Ovary (tissue), 10 donors: ENCODE measurements at regions of chr12 and their contacts with region 1.

Region 1: DNA sequence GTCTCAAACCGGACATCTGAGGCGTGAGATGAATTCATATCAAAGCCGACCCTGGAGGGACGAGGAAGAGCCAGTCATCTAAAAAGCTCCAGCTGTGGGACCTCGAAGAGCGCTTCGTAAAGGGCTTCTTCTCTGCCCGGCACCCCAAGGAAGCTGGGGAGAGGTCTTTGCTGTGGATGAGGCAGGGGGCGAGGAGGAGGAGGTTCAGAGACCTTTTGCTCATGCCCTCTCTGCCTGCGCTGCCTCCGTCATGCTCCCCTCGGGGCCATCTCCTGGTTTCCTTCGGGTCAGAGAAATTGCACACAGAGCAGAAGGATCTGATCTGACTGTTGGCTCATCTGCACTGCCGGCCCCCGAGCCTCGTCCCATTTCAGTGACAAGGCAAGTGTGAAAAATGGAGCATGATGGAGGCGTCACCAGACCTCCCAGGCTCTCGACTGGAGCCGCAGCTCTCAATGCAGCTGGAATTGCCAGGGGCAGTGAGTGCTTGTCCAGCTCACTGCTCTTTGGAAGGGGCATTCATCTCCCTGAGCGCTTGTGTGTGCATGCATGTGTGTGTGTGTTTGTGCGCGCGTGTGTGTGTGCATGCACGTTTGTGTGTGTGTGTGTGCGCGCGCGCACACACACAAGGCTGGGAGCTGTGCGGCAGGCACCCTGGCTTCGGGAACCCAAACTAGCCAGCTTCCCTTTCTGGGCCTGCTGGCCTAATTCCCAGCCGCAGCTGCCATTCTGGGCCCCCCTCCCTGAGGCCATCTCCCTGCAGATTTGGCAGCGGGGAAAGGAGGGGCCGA is 9.2 kb downstream of the CABP1 start:
- DNase-seq: no peak
- H3K4me3 ChIP-seq: peak overlapping the region; percentile 30
- H3K27ac ChIP-seq: no peak overlapping the region
- H3K4me1 ChIP-seq: no peaks in the 10 kb centered on the region
- H3K27me3 ChIP-seq: no peaks in the 10 kb centered on the region
- CTCF ChIP-seq: no peak
- EP300 ChIP-seq: no peak
- POLR2A ChIP-seq: no peak

Region 2: GRCh38 chr12:120687578-120688289 is 38.1 kb after region 1 on chr12:
- intact Hi-C with region 1: no loop called
- DNase-seq: peak in 1 of 5 donors; percentile 20
- H3K4me3 ChIP-seq: peak overlapping the region; percentile 92
- H3K27ac ChIP-seq: peak overlapping the region in 1 of 2 donors; percentile 90
- H3K4me1 ChIP-seq: peaks cover 9% of the 10 kb centered on the region
- H3K27me3 ChIP-seq: no peaks in the 10 kb centered on the region
- CTCF ChIP-seq: no peak
- EP300 ChIP-seq: no peak
- POLR2A ChIP-seq: no peak

Region 3: DNA sequence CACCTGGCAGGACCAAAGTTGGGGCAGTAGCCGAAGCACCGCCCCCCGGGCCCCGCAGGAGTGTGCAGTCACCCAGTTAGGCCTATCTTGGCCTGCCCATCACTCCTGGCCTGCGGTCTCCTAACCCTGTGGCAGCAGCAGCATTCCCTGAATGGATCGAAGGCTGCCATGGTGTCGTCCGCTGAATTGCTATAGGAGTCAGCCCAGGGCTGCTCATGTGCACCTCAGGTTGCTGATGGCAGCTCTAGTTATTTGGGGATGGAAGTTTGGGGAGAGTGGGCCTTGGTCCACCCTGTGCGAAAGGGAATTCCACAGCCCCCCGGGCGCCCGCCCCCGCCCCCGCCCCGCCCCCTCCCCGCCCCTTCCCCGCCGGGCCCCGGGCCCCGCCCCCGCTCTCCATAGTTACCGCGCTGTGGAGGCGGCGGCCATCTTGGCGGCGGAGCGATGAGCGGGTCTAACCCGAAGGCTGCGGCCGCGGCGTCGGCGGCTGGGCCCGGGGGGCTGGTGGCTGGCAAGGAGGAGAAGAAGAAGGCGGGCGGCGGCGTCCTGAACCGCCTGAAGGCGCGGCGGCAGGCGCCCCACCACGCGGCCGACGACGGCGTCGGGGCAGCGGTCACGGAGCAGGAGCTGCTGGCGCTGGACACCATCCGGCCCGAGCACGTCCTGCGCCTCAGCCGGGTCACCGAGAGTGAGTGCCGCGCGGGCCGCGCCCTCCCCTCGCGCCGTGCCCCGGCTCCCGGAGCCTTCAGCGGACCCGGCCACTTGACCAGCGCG is 60.6 kb after region 1 on chr12 and contains the start of gene UNC119B:
- intact Hi-C with region 1: loop called (anchors 5 to 10 kb)
- DNase-seq: peak; percentile 64 to 83 (median 80)
- H3K4me3 ChIP-seq: peak within 1 kb of the TSS; percentile 64
- H3K27ac ChIP-seq: peak within 1 kb of the TSS; percentile 56 to 76
- H3K4me1 ChIP-seq: peaks cover 4% of the 10 kb centered on the region
- H3K27me3 ChIP-seq: no peaks in the 10 kb centered on the region
- CTCF ChIP-seq: peak in 1 of 3 donors; percentile 6
- EP300 ChIP-seq: no peak
- POLR2A ChIP-seq: peak; percentile 53
- total RNA-seq, gene UNC119B: 18.4 to 54.4 (median 46.2) TPM

Region 4: GRCh38 chr12:120961604-120962531 is 312.2 kb after region 1 on chr12:
- intact Hi-C with region 1: loop called in 2 of 4 experiments (anchors 5 to 10 kb)
- DNase-seq: no peak
- H3K4me3 ChIP-seq: no peak overlapping the region
- H3K27ac ChIP-seq: no peak overlapping the region
- H3K4me1 ChIP-seq: no peaks in the 10 kb centered on the region
- H3K27me3 ChIP-seq: no peaks in the 10 kb centered on the region
- CTCF ChIP-seq: no peak
- EP300 ChIP-seq: no peak
- POLR2A ChIP-seq: no peak

Region 5: DNA sequence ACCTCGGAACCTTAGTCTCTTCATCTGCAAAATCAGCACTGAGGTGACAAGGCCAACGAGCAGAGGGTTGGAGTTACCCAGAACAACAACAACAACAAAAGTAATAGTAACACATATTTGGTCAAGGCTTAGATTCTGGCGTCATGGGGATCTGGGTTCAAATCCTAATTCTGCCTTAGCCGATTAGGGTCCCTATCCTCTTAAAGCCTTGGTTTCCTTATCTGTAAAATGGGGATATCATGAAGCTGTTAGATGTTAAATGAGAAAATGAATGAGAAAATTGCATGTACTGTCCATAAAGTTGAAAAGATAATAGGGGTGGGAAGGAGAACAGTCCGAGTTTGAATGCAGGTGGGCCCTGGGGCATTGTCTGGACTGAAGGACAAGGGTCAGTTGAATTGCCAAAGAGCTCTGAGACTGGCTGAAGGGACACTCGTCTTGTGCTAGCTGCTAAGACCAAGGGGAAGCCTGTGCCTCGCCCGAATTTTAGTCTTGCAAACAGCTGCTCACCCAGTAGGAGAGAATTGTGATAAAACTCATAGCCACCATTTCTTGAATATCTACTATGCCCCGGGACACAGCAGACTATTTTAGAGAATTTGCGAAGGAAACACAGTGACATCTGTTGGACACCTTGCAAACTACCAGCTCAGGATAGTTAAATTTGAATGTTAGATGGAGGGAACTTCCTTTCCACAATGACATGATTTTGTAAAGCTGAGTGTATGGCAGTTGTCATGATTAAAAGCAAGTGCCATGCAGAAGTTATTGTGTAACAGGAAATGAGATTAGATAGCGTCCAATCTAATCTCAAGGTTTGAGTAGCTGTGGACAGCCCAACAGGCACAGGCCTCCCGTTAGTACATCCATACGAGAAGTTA is 321.9 kb after region 1 on chr12:
- intact Hi-C with region 1: loop called (anchors 5 to 10 kb)
- DNase-seq: peak in 1 of 5 donors; percentile 47
- H3K4me3 ChIP-seq: no peak overlapping the region
- H3K27ac ChIP-seq: no peak overlapping the region
- H3K4me1 ChIP-seq: no peaks in the 10 kb centered on the region
- H3K27me3 ChIP-seq: no peaks in the 10 kb centered on the region
- CTCF ChIP-seq: peak; percentile 48 to 78 (median 65)
- EP300 ChIP-seq: no peak
- POLR2A ChIP-seq: no peak

Region 6: GRCh38 chr12:121279081-121279394 is 629.4 kb after region 1 on chr12:
- intact Hi-C with region 1: no loop called
- DNase-seq: peak in 3 of 5 donors; percentile 65 to 87 (median 75)
- H3K4me3 ChIP-seq: no peak overlapping the region
- H3K27ac ChIP-seq: peak overlapping the region; percentile 50 to 60
- H3K4me1 ChIP-seq: peaks cover 24% of the 10 kb centered on the region
- H3K27me3 ChIP-seq: no peaks in the 10 kb centered on the region
- CTCF ChIP-seq: no peak
- EP300 ChIP-seq: no peak
- POLR2A ChIP-seq: no peak